Activated CD8-positive, alpha-beta memory T cell treated with anti-CD3 and anti-CD28 coated beads, Interleukin-2, amount 10 ng/mL, durations not matched to agents 7 days and 5 days (primary cell): ENCODE measurements at regions of chr1 and their contacts with region 1.

Region 1: GRCh38 chr1:101238681-101239094 is 1.9 kb downstream of the S1PR1 start:
- DNase-seq: peak; percentile 94
- ATAC-seq: peak; percentile 55
- H3K4me3 Mint-ChIP-seq: peak overlapping the region; percentile 88
- H3K27ac Mint-ChIP-seq: peak overlapping the region; percentile 95
- H3K4me1 Mint-ChIP-seq: peaks cover 59% of the 10 kb centered on the region
- H3K27me3 Mint-ChIP-seq: no peaks in the 10 kb centered on the region

Region 2: DNA sequence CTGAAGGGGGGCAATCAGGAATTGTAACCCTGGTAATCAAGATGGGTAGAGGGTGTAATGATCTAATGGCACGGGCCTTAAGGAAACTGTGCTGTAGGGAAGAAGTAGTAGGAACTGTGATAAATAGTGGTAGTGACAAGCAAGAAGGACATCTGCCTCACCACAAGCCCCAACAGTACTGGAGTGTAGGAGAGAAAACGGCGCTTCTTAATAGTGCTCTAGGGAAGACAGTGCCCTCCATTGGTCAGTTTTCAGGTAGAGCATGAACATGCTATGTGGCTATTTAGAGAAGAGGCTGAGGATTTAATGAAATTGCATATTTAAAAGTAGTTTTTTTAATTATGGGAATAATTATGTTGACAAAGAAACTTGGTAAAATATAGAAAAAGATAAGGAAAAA is 310.6 kb before region 1 on chr1:
- CTCF ChIA-PET with region 1: interaction called, 25 read pairs
- DNase-seq: no peak
- ATAC-seq: no peak
- H3K4me3 Mint-ChIP-seq: no peak overlapping the region
- H3K27ac Mint-ChIP-seq: no peak overlapping the region
- H3K4me1 Mint-ChIP-seq: peaks cover 37% of the 10 kb centered on the region
- H3K27me3 Mint-ChIP-seq: no peaks in the 10 kb centered on the region

Region 3: DNA sequence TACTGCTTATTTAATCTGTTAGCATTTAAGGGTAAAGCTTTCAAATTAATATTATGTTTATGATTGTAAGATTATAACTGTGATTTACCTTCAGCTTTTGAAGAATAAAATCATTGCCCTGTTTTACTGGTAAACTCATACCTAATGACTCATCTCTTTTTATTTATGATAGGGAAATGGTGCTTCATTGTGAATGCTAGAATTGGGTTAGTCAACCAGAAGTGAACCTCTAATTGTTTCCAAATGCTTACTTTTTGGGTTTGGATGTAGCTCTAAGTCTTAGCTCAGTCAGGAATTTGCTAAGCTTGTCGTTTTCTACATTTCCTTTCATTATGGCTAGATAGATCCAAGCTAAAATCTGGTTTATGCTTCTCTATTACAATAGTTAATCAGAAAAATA is 283.4 kb before region 1 on chr1:
- CTCF ChIA-PET with region 1: no interaction called
- DNase-seq: no peak
- ATAC-seq: no peak
- H3K4me3 Mint-ChIP-seq: no peak overlapping the region
- H3K27ac Mint-ChIP-seq: no peak overlapping the region
- H3K4me1 Mint-ChIP-seq: peaks cover 17% of the 10 kb centered on the region
- H3K27me3 Mint-ChIP-seq: no peaks in the 10 kb centered on the region

Region 4: DNA sequence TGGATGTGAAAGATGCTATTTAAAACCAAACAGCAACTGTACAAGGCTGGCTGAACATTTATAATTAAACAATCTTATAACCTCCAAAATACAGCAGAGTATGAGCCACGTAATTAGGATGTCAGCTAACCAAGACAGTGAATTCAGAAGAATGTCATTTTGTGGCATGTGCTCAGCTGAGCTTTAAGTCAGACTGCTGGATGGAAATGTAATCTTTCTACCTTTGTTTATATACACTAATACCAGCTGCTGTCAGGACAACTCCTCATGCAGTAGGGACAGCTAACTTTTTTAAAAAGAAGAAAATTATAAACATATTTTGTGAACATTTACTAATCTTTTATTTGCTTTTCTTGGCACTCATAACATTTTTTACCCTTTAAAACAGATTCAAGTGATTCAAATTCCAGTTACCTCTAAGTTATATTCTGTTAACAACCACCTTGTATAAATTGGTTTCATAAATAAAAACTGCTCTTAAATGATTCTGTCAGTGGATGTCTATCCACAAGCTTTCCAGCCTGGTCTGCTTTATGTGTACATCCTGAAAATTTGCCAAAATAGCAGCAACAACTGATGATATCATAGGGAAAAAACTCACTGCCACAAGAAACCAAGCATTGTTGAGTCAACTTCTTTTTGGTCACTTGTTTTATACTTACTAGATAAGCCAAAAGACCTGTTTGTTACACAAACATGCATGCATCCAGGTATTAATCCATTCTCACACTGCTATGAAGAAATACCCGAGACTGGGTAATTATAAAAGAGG is 249.2 kb before region 1 on chr1:
- CTCF ChIA-PET with region 1: no interaction called
- DNase-seq: no peak
- ATAC-seq: no peak
- H3K4me3 Mint-ChIP-seq: no peak overlapping the region
- H3K27ac Mint-ChIP-seq: no peak overlapping the region
- H3K4me1 Mint-ChIP-seq: no peaks in the 10 kb centered on the region
- H3K27me3 Mint-ChIP-seq: no peaks in the 10 kb centered on the region

Region 5: DNA sequence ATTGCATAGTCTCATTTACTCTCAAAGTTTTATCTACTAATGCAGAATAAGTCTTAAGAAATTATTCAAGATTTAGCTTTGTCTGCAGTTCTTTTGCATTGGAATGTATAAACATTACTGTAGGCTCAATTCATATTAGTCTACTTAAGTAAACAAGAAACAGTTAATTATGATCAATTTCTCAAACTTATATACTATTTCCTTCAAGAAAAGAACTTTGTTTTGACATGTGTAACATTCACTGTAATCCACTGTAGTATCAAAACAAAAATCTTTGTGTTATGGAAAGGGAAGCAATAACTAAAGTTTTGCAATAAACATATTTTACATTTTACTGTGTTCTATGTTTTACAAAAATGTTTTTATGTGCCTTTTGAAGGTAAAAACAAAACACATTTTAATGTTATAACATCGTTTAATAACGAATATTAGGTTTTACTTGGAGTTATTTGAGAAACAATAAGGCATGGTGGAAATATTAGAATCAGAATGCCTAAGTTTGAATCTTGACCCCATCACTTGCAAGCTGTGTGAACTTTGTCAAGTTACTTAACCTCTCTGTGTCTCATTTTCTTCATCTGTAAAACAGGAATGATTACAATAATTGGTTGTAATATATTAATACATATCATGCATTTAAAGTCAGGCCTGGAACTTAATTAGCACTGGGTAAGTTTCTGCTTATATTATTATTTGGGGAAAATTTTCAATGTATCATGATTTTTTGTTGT is 136.1 kb before region 1 on chr1:
- CTCF ChIA-PET with region 1: no interaction called
- DNase-seq: no peak
- ATAC-seq: no peak
- H3K4me3 Mint-ChIP-seq: no peak overlapping the region
- H3K27ac Mint-ChIP-seq: no peak overlapping the region
- H3K4me1 Mint-ChIP-seq: peaks cover 2% of the 10 kb centered on the region
- H3K27me3 Mint-ChIP-seq: peaks cover 3% of the 10 kb centered on the region

Region 6: GRCh38 chr1:101122452-101123166 is 116.1 kb before region 1 on chr1:
- CTCF ChIA-PET with region 1: interaction called, 12 read pairs
- DNase-seq: peak; percentile 64
- ATAC-seq: peak; percentile 72
- H3K4me3 Mint-ChIP-seq: no peak overlapping the region
- H3K27ac Mint-ChIP-seq: peak overlapping the region; percentile 71
- H3K4me1 Mint-ChIP-seq: peaks cover 44% of the 10 kb centered on the region
- H3K27me3 Mint-ChIP-seq: peaks cover 23% of the 10 kb centered on the region

Region 7: GRCh38 chr1:101136739-101137138 is 101.9 kb before region 1 on chr1:
- CTCF ChIA-PET with region 1: interaction called, 37 read pairs
- DNase-seq: no peak
- ATAC-seq: peak; percentile 82
- H3K4me3 Mint-ChIP-seq: peak overlapping the region; percentile 0
- H3K27ac Mint-ChIP-seq: peak overlapping the region; percentile 65
- H3K4me1 Mint-ChIP-seq: peaks cover 42% of the 10 kb centered on the region
- H3K27me3 Mint-ChIP-seq: no peaks in the 10 kb centered on the region

Region 8: GRCh38 chr1:101257500-101258325 is 19.0 kb after region 1 on chr1:
- CTCF ChIA-PET with region 1: interaction called, 47 read pairs
- DNase-seq: peak; percentile 82
- ATAC-seq: peak; percentile 83
- H3K4me3 Mint-ChIP-seq: peak overlapping the region; percentile 4
- H3K27ac Mint-ChIP-seq: peak overlapping the region; percentile 65
- H3K4me1 Mint-ChIP-seq: peaks cover 56% of the 10 kb centered on the region
- H3K27me3 Mint-ChIP-seq: no peaks in the 10 kb centered on the region